Activated CD8-positive, alpha-beta memory T cell treated with anti-CD3 and anti-CD28 coated beads, Interleukin-2, amount 10 ng/mL, durations not matched to agents 7 days and 5 days (primary cell): ENCODE measurements at regions of chr4 and their contacts with region 1.

Region 1: DNA sequence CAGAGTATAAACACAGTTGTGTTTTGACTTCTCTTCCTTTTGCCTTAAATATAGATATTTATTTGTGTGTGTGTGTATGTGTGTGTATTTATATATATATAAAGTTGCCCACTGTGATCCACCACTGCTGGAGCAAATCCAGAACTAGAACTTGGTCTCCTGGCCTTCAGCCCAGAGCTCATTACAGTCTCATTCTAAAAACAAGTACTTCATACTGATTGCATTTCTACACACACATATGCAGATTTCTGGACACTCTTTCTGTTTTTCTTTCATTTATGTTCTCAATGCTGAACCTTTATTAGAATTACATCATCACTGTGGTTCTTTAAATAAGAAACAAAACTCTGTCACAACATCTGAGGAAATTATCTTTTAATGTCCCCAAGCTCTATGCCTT is 381 bp downstream of the TXK start:
- DNase-seq: no peak
- ATAC-seq: no peak
- H3K4me3 Mint-ChIP-seq: peak overlapping the region; percentile 73
- H3K27ac Mint-ChIP-seq: peak overlapping the region; percentile 84
- H3K4me1 Mint-ChIP-seq: peaks cover 80% of the 10 kb centered on the region
- H3K27me3 Mint-ChIP-seq: no peaks in the 10 kb centered on the region

Region 2: DNA sequence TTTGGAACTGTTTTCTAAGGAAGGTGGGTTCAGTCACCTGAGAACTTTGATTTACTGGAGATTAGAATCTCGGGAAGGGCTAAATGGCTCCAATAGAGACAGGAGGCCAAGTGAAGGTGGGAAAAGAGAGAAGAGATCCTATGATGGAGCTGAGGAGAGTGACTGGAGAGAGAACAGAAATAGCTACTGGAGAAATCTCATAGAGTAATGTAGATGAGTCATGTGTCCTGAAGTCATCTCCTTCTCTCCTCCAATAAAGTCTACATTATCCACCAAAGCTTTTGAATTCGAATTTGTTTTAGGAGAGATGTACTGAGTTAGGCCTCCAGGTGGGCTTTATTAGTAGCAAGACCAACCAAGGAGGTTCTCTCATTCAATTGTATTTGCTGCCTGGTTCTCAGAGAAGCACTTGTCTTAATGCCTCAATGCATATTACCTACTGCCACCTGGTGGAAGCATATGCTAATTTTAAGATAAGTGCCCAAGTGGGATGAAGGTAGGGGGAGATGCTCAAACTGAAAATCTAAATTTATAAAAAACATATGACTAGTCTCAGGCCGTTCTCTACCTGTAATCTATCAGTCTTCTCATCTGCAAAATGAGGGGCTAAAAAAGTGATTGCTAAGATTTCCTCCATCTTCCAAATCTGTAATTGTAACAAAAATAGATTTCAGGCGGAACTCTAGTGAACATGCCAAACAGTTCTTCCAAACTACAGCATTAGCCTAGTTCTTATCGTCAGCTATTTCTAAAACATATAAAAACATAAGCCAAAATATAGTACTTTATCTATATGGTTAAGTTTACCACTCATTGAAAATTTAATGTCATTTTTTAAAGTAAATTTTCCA is 24.0 kb before region 1 on chr4:
- CTCF ChIA-PET with region 1: interaction called, 15 read pairs
- DNase-seq: no peak
- ATAC-seq: peak; percentile 77
- H3K4me3 Mint-ChIP-seq: no peak overlapping the region
- H3K27ac Mint-ChIP-seq: no peak overlapping the region
- H3K4me1 Mint-ChIP-seq: peaks cover 46% of the 10 kb centered on the region
- H3K27me3 Mint-ChIP-seq: no peaks in the 10 kb centered on the region